ENCODE measurements at regions of chrX and their contacts with region 1.

Region 1: DNA sequence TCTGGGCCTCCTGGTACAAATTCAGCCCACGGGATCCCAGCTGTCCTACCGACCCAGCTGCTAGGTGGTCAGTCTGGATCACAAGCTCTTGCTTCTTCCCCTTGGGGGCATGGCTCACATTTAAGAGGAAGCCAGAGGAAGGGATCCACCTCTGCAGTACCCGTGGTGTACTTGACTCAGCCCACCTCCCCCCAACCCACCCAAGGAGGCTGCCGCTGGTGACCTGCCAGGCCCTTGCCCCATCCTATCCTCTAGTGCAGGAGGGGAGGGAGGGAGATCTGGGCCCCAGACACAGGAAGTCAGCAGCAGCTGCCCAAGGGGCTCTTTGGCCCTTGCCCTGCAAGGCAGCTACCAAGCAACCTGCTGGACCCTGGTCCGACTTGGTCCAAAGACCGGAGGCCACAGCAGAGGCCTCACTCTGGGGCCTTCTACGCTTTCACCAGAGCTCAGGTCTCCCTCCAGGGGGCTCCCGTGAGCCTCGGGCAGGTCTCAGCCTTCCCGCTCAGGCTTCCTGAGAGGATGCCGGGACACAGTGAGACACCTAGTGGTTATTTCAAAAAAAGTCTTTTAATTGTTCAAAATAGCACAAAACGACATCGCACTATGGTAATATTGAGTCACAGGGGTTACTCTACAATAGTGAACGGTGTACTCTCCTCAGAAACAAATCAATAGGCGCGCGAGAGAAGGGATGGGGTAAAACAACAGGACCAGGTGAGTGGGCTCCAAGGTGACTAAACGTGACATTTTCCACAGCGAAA is 2.7 kb upstream of the RENBP start:
- DNase-seq: peak in 3 of 4 donors; percentile 62 to 86 (median 82)
- ATAC-seq: peak; percentile 87
- H3K4me3 ChIP-seq: no peak overlapping the region
- H3K27ac ChIP-seq: peak overlapping the region in 1 of 2 donors; percentile 61
- H3K4me1 ChIP-seq: peaks cover 0 to 47% of the 10 kb centered on the region in 2 donors
- H3K27me3 ChIP-seq: no peaks in the 10 kb centered on the region
- CTCF ChIP-seq: peak; percentile 71 to 74

Region 2: DNA sequence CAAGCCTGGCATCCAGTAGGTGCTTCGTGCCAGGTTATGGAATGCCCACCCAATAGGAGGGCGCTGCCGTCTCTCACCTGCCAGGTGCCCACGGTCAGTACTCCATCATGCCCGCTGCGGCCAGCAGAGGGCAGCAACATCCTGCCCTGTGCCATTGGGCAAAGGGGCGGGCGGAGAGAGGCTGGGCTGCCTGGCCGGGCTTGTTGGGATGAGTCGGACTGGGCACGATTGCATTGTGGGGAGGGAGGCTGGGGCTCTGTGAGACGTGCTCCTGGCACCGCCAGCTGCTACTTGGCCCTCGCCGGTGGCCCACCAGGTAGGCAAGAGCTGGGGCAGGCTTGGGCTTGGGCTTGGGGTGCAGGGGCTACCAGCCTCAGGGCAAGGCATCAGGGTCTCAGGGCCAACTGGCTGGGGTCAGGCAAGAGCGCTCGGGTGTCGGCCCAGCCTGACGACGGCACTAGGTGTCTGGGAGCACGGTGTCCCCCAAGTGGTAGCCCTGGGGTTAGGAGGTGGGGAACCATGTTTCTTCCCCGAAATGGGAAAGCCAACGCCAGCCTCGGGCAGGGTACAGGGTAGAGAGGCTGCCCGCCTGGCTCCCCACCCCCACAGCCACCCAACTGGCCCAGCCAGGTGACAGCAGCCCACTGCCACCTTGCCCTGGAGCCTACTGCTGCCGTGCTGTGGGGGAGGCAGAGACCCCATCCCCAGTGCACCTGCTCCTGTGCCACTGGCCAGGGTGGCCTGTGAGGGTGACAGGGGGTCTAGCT is 183.0 kb before region 1 on chrX and contains the start of gene PLXNB3:
- intact Hi-C with region 1: loop called in 1 of 2 experiments (anchors 10 kb)
- DNase-seq: peak in 3 of 4 donors; percentile 65 to 93 (median 77)
- ATAC-seq: peak; percentile 93
- H3K4me3 ChIP-seq: no peak within 1 kb of the TSS
- H3K27ac ChIP-seq: no peak within 1 kb of the TSS
- H3K4me1 ChIP-seq: peaks cover 0 to 5% of the 10 kb centered on the region in 2 donors
- H3K27me3 ChIP-seq: no peaks in the 10 kb centered on the region
- CTCF ChIP-seq: peak; percentile 66 to 74
- polyA plus RNA-seq, gene PLXNB3: 2.7 to 5.2 (median 3.7) TPM

Region 3: DNA sequence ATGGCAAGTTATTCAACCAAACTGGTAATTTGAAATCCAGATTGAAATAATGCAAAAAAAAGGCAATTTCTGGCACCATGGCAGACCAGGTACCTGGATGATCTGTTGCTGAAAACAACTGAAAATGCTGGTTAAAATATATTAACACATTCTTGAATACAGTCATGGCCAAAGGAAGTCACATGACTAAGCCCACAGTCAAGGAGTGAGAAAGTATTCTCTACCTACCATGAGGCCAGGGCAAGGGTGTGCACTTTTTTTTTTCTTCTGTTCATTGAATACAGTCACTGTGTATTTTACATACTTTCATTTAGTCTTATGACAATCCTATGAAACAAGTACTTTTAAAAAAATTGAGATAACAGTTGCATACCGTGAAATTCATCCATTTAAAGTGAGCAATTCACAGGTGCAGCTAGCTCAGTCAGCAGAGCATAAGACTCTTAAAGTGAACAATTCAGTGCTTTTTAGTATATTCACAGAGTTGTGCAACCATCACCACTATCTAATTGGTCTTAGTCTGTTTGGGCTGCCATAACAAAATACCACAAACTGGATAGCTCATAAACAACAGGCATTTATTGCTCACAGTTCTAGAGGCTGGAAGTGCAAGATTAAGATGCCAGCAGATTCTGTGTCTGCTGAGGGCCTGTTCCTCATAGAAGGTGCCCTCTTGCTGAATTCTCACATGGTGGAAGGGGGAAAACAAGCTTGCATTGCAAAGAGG is 862.9 kb after region 1 on chrX:
- intact Hi-C with region 1: no loop called
- DNase-seq: no peak
- ATAC-seq: no peak
- H3K4me3 ChIP-seq: no peak overlapping the region
- H3K27ac ChIP-seq: no peak overlapping the region
- H3K4me1 ChIP-seq: peaks cover 0 to 6% of the 10 kb centered on the region in 2 donors
- H3K27me3 ChIP-seq: no peaks in the 10 kb centered on the region
- CTCF ChIP-seq: no peak